Right ventricle myocardium inferior (tissue), 1 donor: ENCODE measurements at regions of chr18 and their contacts with region 1.

Region 1: GRCh38 chr18:28108814-28109213 is 68.1 kb downstream of the CDH2 start:
- DNase-seq: no peak
- ATAC-seq: no peak

Region 2: DNA sequence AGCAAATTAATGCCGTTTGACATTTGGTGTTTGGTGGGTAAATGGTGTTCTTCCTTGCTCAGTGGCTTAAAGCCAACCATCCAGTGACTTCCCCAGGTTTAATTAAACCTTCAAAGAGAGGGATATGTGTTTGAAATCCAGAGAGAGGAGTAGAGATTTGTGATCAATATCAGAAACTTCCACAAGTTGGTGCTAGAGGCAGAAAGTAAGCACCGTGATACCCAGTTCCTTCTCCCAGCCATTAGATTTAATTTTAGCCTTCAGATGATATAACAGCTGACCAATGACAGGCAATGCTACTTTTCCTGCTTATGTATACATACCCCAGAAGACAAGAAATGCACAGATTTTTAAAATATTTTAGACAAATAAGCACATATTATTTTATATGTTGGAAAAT is 330.4 kb before region 1 on chr18:
- intact Hi-C with region 1: loop called (anchors 5 kb)
- DNase-seq: no peak
- ATAC-seq: peak; percentile 56

Region 3: GRCh38 chr18:28005164-28005563 is 103.7 kb before region 1 on chr18:
- intact Hi-C with region 1: loop called (anchors 5 kb)
- DNase-seq: no peak
- ATAC-seq: peak; percentile 20

Region 4: DNA sequence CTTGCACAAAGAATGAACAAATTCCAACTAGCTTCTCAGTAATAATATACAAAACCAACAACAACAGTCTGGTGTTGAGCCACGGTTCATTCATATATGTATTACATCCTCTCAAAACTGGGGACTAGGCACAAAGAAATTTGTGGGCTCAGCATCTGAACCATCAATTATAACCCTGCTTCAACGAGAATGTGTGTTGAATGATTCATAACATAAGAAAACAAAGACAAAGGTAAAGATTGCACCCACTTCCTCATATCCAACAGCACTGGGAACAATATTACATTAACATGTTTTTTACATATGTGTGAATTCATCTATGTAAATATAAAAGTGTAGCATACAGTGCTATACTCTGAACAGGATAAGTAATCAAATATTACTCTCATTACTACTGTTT is 76.6 kb before region 1 on chr18:
- intact Hi-C with region 1: no loop called
- DNase-seq: no peak
- ATAC-seq: no peak